ENCODE measurements at regions of chr13 and their contacts with region 1.

Region 1: DNA sequence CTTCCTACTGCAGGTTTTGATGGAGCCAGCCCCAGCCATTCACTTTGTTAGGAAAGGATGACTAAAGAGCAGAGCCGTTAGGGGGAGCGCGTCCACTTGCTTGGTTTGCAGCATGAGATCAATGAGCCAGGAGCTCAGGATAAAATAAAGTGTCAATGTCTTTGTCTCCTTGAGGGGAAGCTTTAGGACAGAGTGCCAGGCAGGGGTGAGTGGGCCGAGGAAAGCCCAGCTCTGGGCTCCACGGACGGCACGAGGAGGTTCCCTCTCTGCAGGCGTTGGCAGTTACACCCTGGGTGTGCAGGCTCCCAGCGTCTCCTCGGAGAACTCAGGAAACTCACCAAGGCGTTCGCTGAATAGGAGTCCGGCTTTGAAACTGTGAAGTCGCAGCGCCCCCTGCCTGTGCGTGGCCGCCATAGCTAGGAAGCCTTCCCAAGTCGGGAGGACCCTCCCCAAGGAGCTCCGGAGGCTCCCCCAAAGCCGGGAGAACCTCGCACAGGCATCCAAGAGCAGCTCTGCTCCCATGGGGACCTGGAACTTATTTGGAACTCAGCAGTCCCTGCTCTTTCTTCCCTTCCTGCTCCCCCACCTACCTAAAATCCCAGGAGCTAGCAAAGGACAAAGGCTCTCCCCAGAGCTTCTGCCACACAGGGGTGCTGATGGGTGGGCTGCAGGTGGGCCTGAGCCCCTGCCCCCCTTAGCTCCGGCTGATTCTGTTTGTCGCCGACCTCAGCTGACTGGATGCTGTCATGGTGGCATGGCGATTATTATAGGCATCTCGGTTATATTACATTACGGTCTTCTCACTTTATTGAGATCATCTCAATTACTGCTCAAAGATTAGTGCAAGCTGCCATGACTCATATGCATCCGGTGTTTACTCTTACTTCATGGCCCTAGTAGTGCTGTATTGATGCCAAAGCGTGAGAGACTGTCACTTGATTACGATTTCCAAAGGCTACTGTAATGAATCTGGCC is 34.4 kb downstream of the GSX1 start:
- DNase-seq: peak; percentile 82 to 92
- ATAC-seq: peak; percentile 91
- H3K4me3 ChIP-seq: no peak overlapping the region
- H3K27ac ChIP-seq: no peak overlapping the region
- H3K4me1 ChIP-seq: no peaks in the 10 kb centered on the region
- H3K27me3 ChIP-seq: no peaks in the 10 kb centered on the region

Region 2: DNA sequence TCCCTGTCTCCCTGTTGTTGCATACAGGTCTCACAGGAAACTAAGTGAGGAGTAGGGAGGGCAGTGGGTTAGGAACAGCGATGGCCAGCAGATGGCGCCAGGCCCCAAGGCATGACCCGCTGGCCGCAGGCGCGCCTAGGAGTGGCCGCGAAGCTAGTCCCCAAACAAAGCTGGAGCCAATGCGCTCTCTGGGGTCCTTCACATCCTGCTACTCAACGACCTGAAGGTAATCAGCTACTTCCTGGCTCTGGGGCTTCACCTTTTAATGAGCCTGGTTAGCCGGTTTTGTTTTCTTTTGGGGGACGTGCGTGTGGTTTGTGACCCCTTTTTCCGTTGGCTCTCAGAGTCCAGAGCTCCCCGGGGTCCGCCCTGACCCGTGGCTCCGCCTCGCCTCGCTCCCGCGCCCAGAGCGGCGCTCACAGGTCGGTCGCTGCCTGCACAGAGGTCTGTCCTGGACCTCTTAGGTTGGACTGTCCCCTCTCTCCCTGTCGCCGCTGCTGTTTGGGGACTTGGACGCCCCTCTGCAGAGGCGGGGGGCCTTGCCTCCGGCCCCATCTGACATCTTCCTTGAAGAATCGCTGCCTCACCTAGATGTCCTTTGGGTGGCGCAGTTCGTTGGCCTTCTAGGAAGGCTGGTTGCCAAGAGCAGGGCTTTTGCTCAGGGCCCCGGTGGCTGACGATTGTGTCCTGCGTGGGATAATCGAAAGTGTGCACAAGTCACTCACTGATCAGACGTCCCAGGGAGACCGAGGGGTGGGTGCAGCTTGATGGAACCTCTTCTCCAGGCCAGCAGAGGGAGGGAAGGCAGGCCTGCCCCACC is 464.4 kb before region 1 on chr13:
- intact Hi-C with region 1: loop called in 1 of 2 experiments (anchors 2 kb)
- DNase-seq: peak; percentile 90 to 96
- ATAC-seq: peak; percentile 95
- H3K4me3 ChIP-seq: peak overlapping the region; percentile 20 to 27
- H3K27ac ChIP-seq: no peak overlapping the region
- H3K4me1 ChIP-seq: no peaks in the 10 kb centered on the region
- H3K27me3 ChIP-seq: no peaks in the 10 kb centered on the region

Region 3: GRCh38 chr13:27533155-27533643 is 293.5 kb before region 1 on chr13:
- intact Hi-C with region 1: loop called (anchors 5 kb)
- DNase-seq: peak; percentile 90 to 96
- ATAC-seq: peak; percentile 89
- H3K4me3 ChIP-seq: no peak overlapping the region
- H3K27ac ChIP-seq: no peak overlapping the region
- H3K4me1 ChIP-seq: no peaks in the 10 kb centered on the region
- H3K27me3 ChIP-seq: no peaks in the 10 kb centered on the region

Region 4: GRCh38 chr13:27808851-27809550 is 17.7 kb before region 1 on chr13:
- intact Hi-C with region 1: no loop called
- DNase-seq: no peak
- ATAC-seq: no peak
- H3K4me3 ChIP-seq: no peak overlapping the region
- H3K27ac ChIP-seq: no peak overlapping the region
- H3K4me1 ChIP-seq: no peaks in the 10 kb centered on the region
- H3K27me3 ChIP-seq: no peaks in the 10 kb centered on the region

Region 5: DNA sequence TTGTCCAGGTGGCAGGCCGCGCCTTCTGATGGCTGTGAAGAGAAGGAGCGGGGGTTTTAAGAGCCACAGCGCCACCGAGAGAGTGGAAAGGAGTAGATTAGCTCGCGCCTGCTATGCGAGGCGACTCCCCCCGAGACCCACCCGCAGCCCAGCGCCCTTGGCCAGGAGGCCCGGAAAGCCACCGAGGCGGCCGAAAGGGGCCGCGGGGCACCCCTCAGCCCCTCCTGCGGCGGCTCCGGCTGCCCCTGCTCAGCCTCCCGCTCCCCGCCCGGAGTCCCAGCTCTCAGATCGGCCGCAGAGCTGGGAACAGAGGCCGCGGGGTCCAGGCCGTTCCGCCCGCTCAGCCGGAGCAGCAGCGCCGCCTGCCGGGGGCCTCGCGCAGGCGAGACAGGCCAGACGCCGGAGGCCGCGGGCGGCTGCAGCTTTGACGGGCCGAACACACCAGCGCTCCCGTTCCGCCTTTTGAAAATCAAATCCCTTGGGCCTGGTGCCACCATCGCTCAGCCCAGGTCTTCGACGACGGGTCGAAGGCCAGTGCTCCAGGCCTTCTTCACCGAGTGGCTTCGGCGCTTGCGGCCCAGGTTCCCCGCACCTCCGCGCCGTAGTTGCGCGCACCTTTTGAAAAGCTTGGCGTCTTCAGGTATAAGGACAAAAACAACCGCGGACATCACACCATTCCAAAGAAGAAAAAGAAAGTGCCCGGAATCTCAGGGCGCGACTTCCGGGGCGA is 127.2 kb after region 1 on chr13:
- intact Hi-C with region 1: loop called (anchors 10 kb)
- DNase-seq: peak; percentile 84 to 89
- ATAC-seq: peak; percentile 94
- H3K4me3 ChIP-seq: peak overlapping the region in 1 of 2 donors; percentile 14
- H3K27ac ChIP-seq: no peak overlapping the region
- H3K4me1 ChIP-seq: no peaks in the 10 kb centered on the region
- H3K27me3 ChIP-seq: no peaks in the 10 kb centered on the region

Region 6: GRCh38 chr13:27997904-27998522 is 171.3 kb after region 1 on chr13:
- intact Hi-C with region 1: loop called in 1 of 2 experiments (anchors 5 kb)
- DNase-seq: peak in 1 of 2 donors; percentile 59
- ATAC-seq: no peak
- H3K4me3 ChIP-seq: no peak overlapping the region
- H3K27ac ChIP-seq: no peak overlapping the region
- H3K4me1 ChIP-seq: no peaks in the 10 kb centered on the region
- H3K27me3 ChIP-seq: no peaks in the 10 kb centered on the region

Measured in aorta (tissue), 5 donors.